PC-3 (cell line): ENCODE measurements at regions of chr5 and their contacts with region 1.

Region 1: DNA sequence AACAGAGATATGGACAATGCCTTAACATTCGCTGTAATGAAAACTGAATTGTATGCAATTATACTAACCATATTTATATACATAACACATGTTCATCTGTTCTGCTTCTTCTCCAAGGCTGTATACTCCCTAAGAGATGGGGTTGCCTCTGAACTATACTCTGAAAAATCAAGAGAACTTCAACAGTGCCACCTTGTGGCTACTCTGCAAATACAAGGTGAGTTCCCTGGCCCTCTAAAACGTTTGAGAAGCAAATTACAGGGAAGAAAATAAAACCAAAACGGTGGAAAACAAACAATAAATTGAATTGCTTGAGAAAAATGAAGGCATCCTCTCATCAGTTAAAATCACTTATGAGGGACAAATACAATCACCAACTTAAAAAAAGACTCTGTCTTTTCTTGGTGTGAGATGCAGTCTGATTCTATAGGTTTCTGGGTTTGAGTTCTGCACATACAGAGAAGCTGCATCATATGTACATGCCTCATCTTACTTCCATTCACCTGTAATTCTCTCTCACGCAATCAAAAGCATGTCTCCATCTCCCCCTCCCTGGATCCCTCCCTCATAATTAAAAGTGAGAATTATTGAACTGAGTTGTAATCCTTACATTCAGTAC is 98.6 kb downstream of the FBXW11 start:
- DNase-seq: peak; percentile 81
- ATAC-seq: peak; percentile 87
- H3K4me3 ChIP-seq: no peak overlapping the region
- H3K27ac ChIP-seq: no peak overlapping the region
- H3K4me1 ChIP-seq: no peaks in the 10 kb centered on the region
- H3K27me3 ChIP-seq: no peaks in the 10 kb centered on the region
- CTCF ChIP-seq: peak; percentile 94

Region 2: DNA sequence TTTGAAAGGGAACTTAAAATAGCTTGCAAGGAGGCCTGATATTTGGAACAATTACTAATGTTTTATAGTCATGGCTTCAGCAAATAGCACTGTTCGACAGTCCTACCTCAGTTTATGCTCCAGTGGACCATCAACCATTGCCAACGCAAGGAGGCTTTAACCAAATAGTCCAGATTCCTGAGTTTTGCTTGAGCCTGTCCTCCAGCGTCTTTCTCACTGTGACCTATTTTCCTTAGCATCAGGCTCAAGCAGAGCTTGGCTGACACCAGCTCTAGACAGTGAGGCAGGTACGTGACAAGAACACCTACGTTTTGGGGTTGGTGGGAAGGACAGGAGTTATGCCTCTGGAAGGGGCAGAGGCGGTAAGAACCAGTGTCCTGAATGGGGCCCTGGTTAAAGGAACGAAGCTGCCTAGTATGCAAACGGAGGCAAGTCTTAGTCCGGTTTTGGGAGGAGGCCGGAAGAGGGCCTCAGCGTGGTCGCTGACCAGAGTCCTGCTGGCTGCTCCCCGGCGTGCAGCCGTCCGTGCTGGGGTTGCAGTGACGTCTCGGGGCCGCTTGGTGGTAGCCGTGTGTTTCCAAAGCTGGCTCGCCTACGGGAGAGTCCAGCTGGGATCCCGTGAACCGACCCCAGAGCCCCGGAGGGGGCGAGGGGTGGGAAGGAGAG is 489.4 kb before region 1 on chr5:
- CTCF ChIA-PET with region 1: no interaction called
- POLR2A ChIA-PET with region 1: no interaction called
- intact Hi-C with region 1: loop called (anchors 1 kb)
- DNase-seq: peak; percentile 88
- ATAC-seq: peak; percentile 76
- H3K4me3 ChIP-seq: peak overlapping the region; percentile 61
- H3K27ac ChIP-seq: no peak overlapping the region
- H3K4me1 ChIP-seq: peaks cover 15% of the 10 kb centered on the region
- H3K27me3 ChIP-seq: peaks cover 24% of the 10 kb centered on the region
- CTCF ChIP-seq: peak; percentile 98

Region 3: DNA sequence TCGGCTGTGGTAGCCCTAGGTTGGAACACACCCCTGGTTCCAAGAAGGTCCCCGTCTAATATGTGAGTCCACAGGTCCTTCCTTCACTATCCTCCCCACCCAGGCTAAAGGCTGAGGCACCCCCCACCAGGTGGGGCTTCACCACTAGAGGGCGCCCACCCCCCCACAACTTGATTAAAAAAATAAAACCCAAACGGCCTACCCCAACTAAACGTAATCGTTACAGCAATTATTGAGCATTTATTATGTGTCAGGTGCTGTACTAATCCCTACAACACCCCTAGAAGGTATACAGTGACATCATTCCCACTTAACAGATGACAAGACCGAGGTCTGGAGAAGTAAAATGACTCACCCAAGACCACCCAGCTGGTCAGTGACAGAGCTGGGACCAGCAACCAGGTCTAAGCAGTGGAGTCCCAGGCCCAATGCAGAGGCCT is 423.4 kb before region 1 on chr5:
- CTCF ChIA-PET with region 1: no interaction called
- POLR2A ChIA-PET with region 1: no interaction called
- intact Hi-C with region 1: loop called (anchors 5 kb)
- DNase-seq: peak; percentile 50
- ATAC-seq: peak; percentile 45; the same call in 1 of the 2 replicates
- H3K4me3 ChIP-seq: no peak overlapping the region
- H3K27ac ChIP-seq: no peak overlapping the region
- H3K4me1 ChIP-seq: no peaks in the 10 kb centered on the region
- H3K27me3 ChIP-seq: peaks cover 13% of the 10 kb centered on the region
- CTCF ChIP-seq: peak; percentile 98

Region 4: DNA sequence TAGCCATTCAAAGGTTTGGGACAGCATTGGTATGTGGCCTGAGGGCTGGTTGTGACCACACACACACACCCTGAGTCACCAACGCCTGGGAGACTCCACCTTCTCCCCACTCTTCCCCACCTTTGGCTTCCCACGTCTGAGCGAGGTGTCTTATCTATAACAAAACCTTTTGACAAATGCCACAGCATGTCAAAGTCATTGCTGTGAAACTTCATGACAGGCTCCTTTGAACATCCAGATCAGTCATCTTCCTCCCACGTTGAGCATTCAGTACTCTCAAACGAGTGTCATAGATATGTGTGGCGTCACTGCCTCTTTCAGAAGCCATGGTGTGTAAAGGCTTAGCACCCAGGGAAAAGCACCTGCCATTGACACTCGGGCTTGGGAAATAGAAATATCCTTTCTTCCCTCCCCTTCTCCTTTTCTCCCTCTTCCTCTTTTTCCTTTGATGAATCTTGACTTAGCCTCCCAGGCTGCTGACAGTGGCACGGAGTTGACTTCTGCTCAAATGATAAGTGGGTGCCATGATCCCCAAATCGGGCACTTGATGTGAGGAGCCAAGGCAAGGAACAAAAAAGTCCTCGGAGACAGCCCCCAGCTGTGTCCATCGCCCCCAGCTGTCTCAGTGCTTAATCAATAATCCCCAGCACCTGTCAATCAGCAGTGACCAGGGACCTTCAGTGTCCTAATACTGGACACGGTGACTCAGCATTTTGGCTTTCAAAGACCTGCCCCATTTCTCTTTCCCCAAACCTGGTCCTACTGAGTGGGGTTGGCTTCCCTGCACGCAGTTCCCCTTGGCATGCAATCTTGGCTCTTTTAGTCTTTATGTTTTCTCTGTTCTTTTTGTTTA is 373.6 kb before region 1 on chr5:
- CTCF ChIA-PET with region 1: no interaction called
- POLR2A ChIA-PET with region 1: no interaction called
- intact Hi-C with region 1: no loop called
- DNase-seq: peak; percentile 60
- ATAC-seq: peak; percentile 74
- H3K4me3 ChIP-seq: no peak overlapping the region
- H3K27ac ChIP-seq: no peak overlapping the region
- H3K4me1 ChIP-seq: peaks cover 9% of the 10 kb centered on the region; the same call in 1 of the 2 replicates
- H3K27me3 ChIP-seq: peaks cover 15% of the 10 kb centered on the region; the same call in 1 of the 2 replicates
- CTCF ChIP-seq: no peak

Region 5: DNA sequence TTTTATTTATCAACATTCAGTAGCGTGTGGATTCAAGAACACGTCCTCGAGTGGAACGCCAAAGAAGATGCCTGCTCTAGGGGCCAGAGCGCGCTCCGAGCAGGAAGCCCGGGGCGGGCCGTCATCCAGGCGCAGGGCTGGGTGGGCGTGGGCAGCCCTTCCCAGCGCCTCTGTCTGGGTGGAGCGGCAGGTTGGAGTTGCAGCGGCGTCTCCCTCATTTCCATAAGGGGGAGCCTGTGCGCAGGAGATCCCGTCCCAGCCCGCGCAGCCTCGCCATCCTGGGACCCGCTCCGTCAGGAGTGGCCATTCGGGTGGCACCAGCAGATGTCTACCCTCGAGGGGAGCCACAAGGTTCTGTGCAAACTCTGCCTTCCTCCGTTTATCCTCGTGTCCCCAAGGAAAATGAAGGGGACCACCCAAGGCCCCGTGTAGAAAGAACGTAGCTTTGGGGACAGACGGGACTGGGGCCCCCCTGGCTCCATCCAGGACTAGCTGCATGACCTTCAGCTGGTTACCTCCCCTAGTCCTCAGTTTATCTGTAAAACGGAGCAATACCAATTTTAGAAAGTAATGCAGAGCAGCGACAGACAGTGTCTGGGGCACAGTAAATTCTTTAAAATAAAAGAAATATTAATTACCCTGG is 277.7 kb before region 1 on chr5:
- CTCF ChIA-PET with region 1: no interaction called
- POLR2A ChIA-PET with region 1: no interaction called
- intact Hi-C with region 1: loop called (anchors 1 kb)
- DNase-seq: peak; percentile 68
- ATAC-seq: peak; percentile 98
- H3K4me3 ChIP-seq: peak overlapping the region; percentile 51
- H3K27ac ChIP-seq: no peak overlapping the region
- H3K4me1 ChIP-seq: 0 out of 2 replicates have a peak, but pooled peaks cover 5% of the 10 kb centered on the region
- H3K27me3 ChIP-seq: peaks cover 56% of the 10 kb centered on the region
- CTCF ChIP-seq: peak; percentile 57

Region 6: DNA sequence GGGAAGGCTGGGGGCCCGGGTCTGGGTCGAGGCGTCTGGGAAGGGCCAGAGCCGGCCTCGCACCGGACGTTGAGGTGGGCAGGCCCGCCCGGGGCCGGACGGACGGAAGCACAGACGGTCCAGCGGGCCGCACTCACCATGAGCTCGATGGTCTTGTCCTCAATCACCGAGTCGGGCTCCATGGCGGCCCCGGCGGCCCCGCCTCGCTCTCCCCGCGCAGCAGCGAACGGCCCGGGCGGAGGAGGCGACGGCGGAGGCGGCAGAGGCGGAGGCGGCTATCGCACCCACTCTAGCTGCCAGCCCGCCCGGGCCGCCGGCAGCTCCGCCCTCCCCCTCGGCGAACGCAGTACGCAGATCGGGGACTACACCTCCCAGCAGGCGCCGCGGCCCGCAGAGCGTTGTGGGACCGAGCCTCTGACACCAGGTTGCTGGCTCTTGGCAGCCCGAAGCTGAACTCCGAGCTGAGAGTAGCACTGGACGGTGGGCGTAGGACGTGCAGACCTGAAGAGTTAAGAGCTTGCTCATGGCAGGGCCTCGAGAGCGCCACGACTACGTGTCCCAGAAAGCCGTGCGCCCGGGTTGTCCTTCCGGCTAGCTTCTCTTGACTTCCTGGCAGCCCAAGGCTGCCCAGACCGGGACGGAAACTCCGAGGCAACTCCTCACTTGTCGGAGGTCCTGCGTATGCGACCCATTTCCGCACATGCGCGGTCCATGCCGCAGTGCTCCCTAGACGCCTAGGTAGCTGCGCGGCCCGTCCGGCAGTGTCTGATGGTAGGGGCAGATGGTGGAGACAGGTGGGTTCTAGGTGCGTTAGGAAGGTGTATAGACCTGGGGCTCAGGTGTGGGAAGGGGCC is 98.7 kb after region 1 on chr5 and contains the start of gene FBXW11:
- CTCF ChIA-PET with region 1: interaction called, 10 read pairs
- POLR2A ChIA-PET with region 1: no interaction called
- intact Hi-C with region 1: loop called (anchors 1 kb)
- DNase-seq: peak; percentile 98
- ATAC-seq: peak; percentile 88
- H3K4me3 ChIP-seq: peak within 1 kb of the TSS; percentile 80
- H3K27ac ChIP-seq: peak within 1 kb of the TSS; percentile 79
- H3K4me1 ChIP-seq: peaks cover 40% of the 10 kb centered on the region
- H3K27me3 ChIP-seq: no peaks in the 10 kb centered on the region
- CTCF ChIP-seq: no peak
- total RNA-seq, gene FBXW11: 62.8 and 69.2 TPM in 2 replicates

Region 7: GRCh38 chr5:172035039-172035438 is 127.2 kb after region 1 on chr5:
- CTCF ChIA-PET with region 1: interaction called, 6 read pairs
- POLR2A ChIA-PET with region 1: interaction called, 4 read pairs
- intact Hi-C with region 1: loop called (anchors 1 kb)
- DNase-seq: no peak
- ATAC-seq: no peak
- H3K4me3 ChIP-seq: no peak overlapping the region
- H3K27ac ChIP-seq: no peak overlapping the region
- H3K4me1 ChIP-seq: no peaks in the 10 kb centered on the region
- H3K27me3 ChIP-seq: no peaks in the 10 kb centered on the region
- CTCF ChIP-seq: no peak

Region 8: DNA sequence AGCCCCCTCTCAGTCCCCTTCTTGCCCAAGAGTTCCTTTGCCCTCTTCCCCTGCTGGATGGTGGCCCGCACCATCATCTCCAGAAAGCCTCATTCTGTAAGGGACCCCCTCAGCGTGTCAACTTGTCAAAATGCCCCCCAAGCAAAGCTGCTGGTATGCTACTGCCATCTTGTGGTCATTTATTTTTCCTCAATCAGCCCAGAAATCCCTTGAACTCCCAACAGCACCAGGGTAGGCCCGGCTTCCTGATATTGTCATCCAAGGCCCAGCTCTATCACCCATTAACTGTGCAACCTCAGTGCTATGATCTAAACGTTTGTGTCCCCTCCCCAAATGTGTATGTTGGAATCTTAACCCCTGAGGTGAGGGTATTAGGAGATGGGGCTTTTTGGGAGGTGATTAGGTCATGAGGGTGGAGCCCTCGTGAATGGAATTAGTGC is 151.8 kb after region 1 on chr5:
- CTCF ChIA-PET with region 1: interaction called, 11 read pairs
- POLR2A ChIA-PET with region 1: no interaction called
- intact Hi-C with region 1: loop called (anchors 1 kb)
- DNase-seq: peak; percentile 34
- ATAC-seq: peak; percentile 62
- H3K4me3 ChIP-seq: no peak overlapping the region
- H3K27ac ChIP-seq: no peak overlapping the region
- H3K4me1 ChIP-seq: no peaks in the 10 kb centered on the region
- H3K27me3 ChIP-seq: no peaks in the 10 kb centered on the region
- CTCF ChIP-seq: peak; percentile 86